HepG2 (cell line): ENCODE measurements at regions of chr11 and their contacts with region 1.

Region 1: DNA sequence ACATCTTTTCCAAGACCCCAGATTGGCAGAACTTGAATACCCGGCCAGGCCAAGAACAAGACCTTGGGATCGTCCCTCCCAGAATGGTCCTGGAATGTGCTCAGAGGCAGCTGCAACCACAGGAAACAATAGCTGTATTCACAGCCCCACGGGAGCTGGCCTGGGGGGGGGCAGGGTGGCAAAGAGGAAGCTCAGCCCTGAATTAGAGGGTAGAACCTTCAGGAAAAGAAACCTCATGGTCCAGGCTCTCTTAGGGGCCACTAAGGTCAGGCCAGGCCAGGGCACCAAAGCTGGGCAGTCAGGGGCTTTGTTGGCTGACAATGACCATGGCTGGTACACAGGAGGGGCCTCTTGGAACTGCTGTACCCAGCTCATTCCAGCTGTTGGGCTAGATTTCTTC is 17.3 kb downstream of the RPL27A start:
- DNase-seq: peak; percentile 84
- ATAC-seq: peak; percentile 56
- H3K4me3 ChIP-seq: no peak overlapping the region
- H3K27ac ChIP-seq: peak overlapping the region; percentile 63
- H3K4me1 ChIP-seq: peaks cover 35% of the 10 kb centered on the region
- H3K27me3 ChIP-seq: no peaks in the 10 kb centered on the region
- CTCF ChIP-seq: no peak
- EP300 ChIP-seq: 0 out of 4 replicates have a peak, but pooled peaks of 1 of the 2 experiments have one; percentile 29
- POLR2A ChIP-seq: 0 out of 4 replicates have a peak, but pooled peaks have one; percentile 13 to 21
- RAD21 ChIP-seq: peak; percentile 16; the same call in 1 of the 2 replicates

Region 2: GRCh38 chr11:8688414-8689362 is 11.2 kb before region 1 on chr11:
- CTCF ChIA-PET with region 1: no interaction called
- POLR2A ChIA-PET with region 1: interaction called, 47 read pairs
- in situ Hi-C with region 1: no loop called
- intact Hi-C with region 1: no loop called
- DNase-seq: peak; percentile 96
- ATAC-seq: peak; percentile 87
- H3K4me3 ChIP-seq: peak overlapping the region; percentile 42 to 64 (median 48); a peak in 5 of 6 replicates
- H3K27ac ChIP-seq: peak overlapping the region; percentile 71
- H3K4me1 ChIP-seq: peaks cover 60% of the 10 kb centered on the region
- H3K27me3 ChIP-seq: no peaks in the 10 kb centered on the region
- CTCF ChIP-seq: peak; percentile 84
- EP300 ChIP-seq: peak in 1 of 2 experiments; percentile 56; a peak in 1 of 4 replicates
- POLR2A ChIP-seq: peak; percentile 77 to 96
- RAD21 ChIP-seq: peak; percentile 78; the same call in 1 of the 2 replicates

Region 3: GRCh38 chr11:8717876-8718753 is 18.2 kb after region 1 on chr11:
- CTCF ChIA-PET with region 1: no interaction called
- POLR2A ChIA-PET with region 1: interaction called, 35 read pairs
- in situ Hi-C with region 1: no loop called
- intact Hi-C with region 1: loop called (anchors 2 kb)
- DNase-seq: peak; percentile 83
- ATAC-seq: peak; percentile 64
- H3K4me3 ChIP-seq: peak overlapping the region in 1 of 3 experiments; percentile 29; a peak in 2 of 6 replicates
- H3K27ac ChIP-seq: peak overlapping the region; percentile 86
- H3K4me1 ChIP-seq: peaks cover 98% of the 10 kb centered on the region
- H3K27me3 ChIP-seq: no peaks in the 10 kb centered on the region
- CTCF ChIP-seq: no peak
- EP300 ChIP-seq: peak in 1 of 2 experiments; percentile 23; a peak in 1 of 4 replicates
- POLR2A ChIP-seq: peak in 1 of 2 experiments; percentile 39; a peak in 1 of 4 replicates
- RAD21 ChIP-seq: no peak

Region 4: GRCh38 chr11:8754241-8754640 is 54.3 kb after region 1 on chr11:
- CTCF ChIA-PET with region 1: no interaction called
- POLR2A ChIA-PET with region 1: no interaction called
- in situ Hi-C with region 1: no loop called
- intact Hi-C with region 1: loop called (anchors 10 kb)
- DNase-seq: no peak
- ATAC-seq: no peak
- H3K4me3 ChIP-seq: no peak overlapping the region
- H3K27ac ChIP-seq: no peak overlapping the region
- H3K4me1 ChIP-seq: peaks cover 24% of the 10 kb centered on the region
- H3K27me3 ChIP-seq: no peaks in the 10 kb centered on the region
- CTCF ChIP-seq: no peak
- EP300 ChIP-seq: no peak
- POLR2A ChIP-seq: no peak
- RAD21 ChIP-seq: no peak

Region 5: GRCh38 chr11:8794677-8795103 is 94.8 kb after region 1 on chr11:
- CTCF ChIA-PET with region 1: no interaction called
- POLR2A ChIA-PET with region 1: interaction called, 5 read pairs
- in situ Hi-C with region 1: no loop called
- intact Hi-C with region 1: loop called (anchors 2 kb)
- DNase-seq: peak; percentile 93
- ATAC-seq: peak; percentile 99
- H3K4me3 ChIP-seq: peak overlapping the region; percentile 49 to 73 (median 62)
- H3K27ac ChIP-seq: peak overlapping the region; percentile 75
- H3K4me1 ChIP-seq: peaks cover 50% of the 10 kb centered on the region
- H3K27me3 ChIP-seq: no peaks in the 10 kb centered on the region
- CTCF ChIP-seq: peak; percentile 85
- EP300 ChIP-seq: peak; percentile 37 to 70; a peak in 2 of 4 replicates
- POLR2A ChIP-seq: peak; percentile 65 to 68; a peak in 3 of 4 replicates
- RAD21 ChIP-seq: peak; percentile 85